A673 (cell line): ENCODE measurements at regions of chr3 and their contacts with region 1.

Region 1: GRCh38 chr3:72818092-72818773 is 30.0 kb downstream of the SHQ1 start:
- DNase-seq: peak; percentile 39
- H3K4me3 ChIP-seq: no peak overlapping the region
- H3K27ac ChIP-seq: no peak overlapping the region
- H3K4me1 ChIP-seq: peaks cover 39% of the 10 kb centered on the region
- H3K27me3 ChIP-seq: no peaks in the 10 kb centered on the region
- CTCF ChIP-seq: peak; percentile 65

Region 2: GRCh38 chr3:71875461-71875947 is 942.7 kb before region 1 on chr3:
- CTCF ChIA-PET with region 1: no interaction called
- POLR2A ChIA-PET with region 1: no interaction called
- intact Hi-C with region 1: loop called (anchors 5 kb)
- DNase-seq: peak; percentile 70
- H3K4me3 ChIP-seq: no peak overlapping the region
- H3K27ac ChIP-seq: no peak overlapping the region
- H3K4me1 ChIP-seq: no peaks in the 10 kb centered on the region
- H3K27me3 ChIP-seq: no peaks in the 10 kb centered on the region
- CTCF ChIP-seq: peak; percentile 72

Region 3: GRCh38 chr3:72270072-72270681 is 548.1 kb before region 1 on chr3:
- CTCF ChIA-PET with region 1: no interaction called
- POLR2A ChIA-PET with region 1: no interaction called
- intact Hi-C with region 1: loop called (anchors 10 kb)
- DNase-seq: peak; percentile 58
- H3K4me3 ChIP-seq: no peak overlapping the region
- H3K27ac ChIP-seq: peak overlapping the region; percentile 50
- H3K4me1 ChIP-seq: peaks cover 23% of the 10 kb centered on the region
- H3K27me3 ChIP-seq: no peaks in the 10 kb centered on the region
- CTCF ChIP-seq: no peak

Region 4: DNA sequence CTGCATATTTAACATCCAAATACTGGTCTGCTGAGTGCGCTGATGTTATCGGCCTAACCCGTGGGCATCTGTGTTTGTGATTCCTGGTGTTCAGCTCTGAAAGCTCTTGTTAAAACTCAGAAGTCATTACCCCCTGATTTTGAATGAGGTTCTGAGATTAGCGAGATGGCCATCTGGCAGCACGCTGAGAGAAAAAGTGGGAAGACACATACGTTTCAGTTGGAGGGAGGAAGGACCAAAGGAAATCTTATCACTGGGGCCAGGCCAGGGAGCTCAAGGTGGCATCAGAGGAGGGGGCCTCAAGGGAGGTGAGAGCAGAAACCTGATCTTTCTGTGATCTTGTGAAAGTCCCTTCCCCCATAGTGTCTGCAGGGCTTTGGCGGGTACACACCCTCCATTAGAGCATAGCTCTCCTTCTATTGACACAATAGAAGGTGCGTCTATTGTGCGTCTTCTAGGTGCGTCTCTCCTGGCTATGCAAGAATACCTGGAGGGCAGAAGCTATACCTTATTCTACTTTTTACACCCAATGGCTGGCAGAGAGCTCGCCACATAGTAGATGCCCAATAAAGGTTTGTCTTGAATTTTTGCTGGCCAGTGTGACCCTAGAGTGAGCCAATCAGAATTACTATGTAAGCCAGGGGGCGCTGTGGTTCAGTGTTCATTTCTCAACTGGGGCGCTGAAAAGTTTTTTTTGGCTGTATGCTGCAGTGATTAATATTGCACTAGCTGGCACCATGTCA is 152.4 kb before region 1 on chr3:
- CTCF ChIA-PET with region 1: no interaction called
- POLR2A ChIA-PET with region 1: no interaction called
- intact Hi-C with region 1: loop called (anchors 10 kb)
- DNase-seq: peak; percentile 27
- H3K4me3 ChIP-seq: no peak overlapping the region
- H3K27ac ChIP-seq: no peak overlapping the region
- H3K4me1 ChIP-seq: no peaks in the 10 kb centered on the region
- H3K27me3 ChIP-seq: no peaks in the 10 kb centered on the region
- CTCF ChIP-seq: peak; percentile 48

Region 5: DNA sequence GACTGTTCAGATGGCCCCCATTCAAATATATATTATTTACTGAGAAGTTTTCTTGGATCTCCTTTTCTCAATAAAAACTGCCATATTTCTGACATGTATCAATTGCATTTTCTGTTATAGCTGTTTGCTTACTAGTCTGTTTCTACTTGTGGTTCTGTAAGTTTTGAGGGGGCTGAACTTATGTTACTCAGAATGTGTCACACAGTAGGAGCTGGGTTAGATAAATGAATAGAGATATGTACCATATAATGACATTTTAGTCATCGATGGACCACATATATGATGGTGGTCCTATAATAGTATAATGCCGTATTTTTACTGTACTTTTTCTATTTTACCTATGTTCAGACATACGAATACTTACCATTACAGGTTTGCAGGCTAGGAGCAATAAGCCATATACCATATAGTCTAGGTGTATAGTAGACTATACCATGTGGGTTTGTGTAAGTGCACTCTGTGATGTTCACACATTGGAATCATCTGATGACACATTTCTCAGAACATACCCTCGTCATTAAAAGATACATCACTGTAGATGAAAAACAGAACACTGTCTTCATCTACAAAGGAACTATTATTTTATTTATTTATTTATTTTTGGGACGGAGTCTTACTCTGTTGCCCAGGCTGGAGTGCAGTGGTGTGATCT is 200.7 kb after region 1 on chr3:
- CTCF ChIA-PET with region 1: no interaction called
- POLR2A ChIA-PET with region 1: no interaction called
- intact Hi-C with region 1: no loop called
- DNase-seq: no peak
- H3K4me3 ChIP-seq: no peak overlapping the region
- H3K27ac ChIP-seq: no peak overlapping the region
- H3K4me1 ChIP-seq: no peaks in the 10 kb centered on the region
- H3K27me3 ChIP-seq: no peaks in the 10 kb centered on the region
- CTCF ChIP-seq: no peak

Region 6: GRCh38 chr3:73086071-73086494 is 267.9 kb after region 1 on chr3:
- CTCF ChIA-PET with region 1: no interaction called
- POLR2A ChIA-PET with region 1: no interaction called
- intact Hi-C with region 1: loop called (anchors 10 kb)
- DNase-seq: peak; percentile 47
- H3K4me3 ChIP-seq: no peak overlapping the region
- H3K27ac ChIP-seq: no peak overlapping the region
- H3K4me1 ChIP-seq: no peaks in the 10 kb centered on the region
- H3K27me3 ChIP-seq: no peaks in the 10 kb centered on the region
- CTCF ChIP-seq: peak; percentile 64